Heart left ventricle (tissue), 16 donors: ENCODE measurements at regions of chr2 and their contacts with region 1.

Region 1: GRCh38 chr2:33583194-33583938 is 15.7 kb downstream of the FAM98A start:
- DNase-seq: no peak
- ATAC-seq: peak in 2 of 4 donors; percentile 47 to 48
- H3K4me3 ChIP-seq: no peak overlapping the region
- H3K27ac ChIP-seq: peak overlapping the region in 2 of 12 donors; percentile 28 to 36
- H3K4me1 ChIP-seq: peaks cover 0 to 25% (median 8%) of the 10 kb centered on the region in 12 donors
- H3K27me3 ChIP-seq: no peaks in the 10 kb centered on the region
- CTCF ChIP-seq: peak; percentile 70 to 88 (median 82)
- POLR2A ChIP-seq: no peak

Region 2: GRCh38 chr2:32553829-32554432 is 1029.4 kb before region 1 on chr2:
- intact Hi-C with region 1: loop called in 1 of 10 experiments (anchors 10 kb)
- DNase-seq: no peak
- ATAC-seq: peak in 3 of 4 donors; percentile 63 to 73 (median 64)
- H3K4me3 ChIP-seq: no peak overlapping the region
- H3K27ac ChIP-seq: no peak overlapping the region
- H3K4me1 ChIP-seq: peaks cover 0 to 5% (median 0%) of the 10 kb centered on the region in 12 donors
- H3K27me3 ChIP-seq: no peaks in the 10 kb centered on the region
- CTCF ChIP-seq: peak; percentile 57 to 81 (median 72)
- POLR2A ChIP-seq: no peak

Region 3: GRCh38 chr2:33412920-33413319 is 170.4 kb before region 1 on chr2:
- intact Hi-C with region 1: loop called in 7 of 10 experiments (anchors 2 to 10 kb)
- DNase-seq: peak in 1 of 5 donors; percentile 28
- ATAC-seq: peak in 2 of 4 donors; percentile 10 to 50
- H3K4me3 ChIP-seq: no peak overlapping the region
- H3K27ac ChIP-seq: no peak overlapping the region
- H3K4me1 ChIP-seq: peaks cover 0 to 11% (median 2%) of the 10 kb centered on the region in 12 donors
- H3K27me3 ChIP-seq: no peaks in the 10 kb centered on the region
- CTCF ChIP-seq: peak; percentile 33 to 70 (median 55)
- POLR2A ChIP-seq: no peak

Region 4: GRCh38 chr2:33419581-33420200 is 163.7 kb before region 1 on chr2:
- intact Hi-C with region 1: loop called in 6 of 10 experiments (anchors 5 to 10 kb)
- DNase-seq: no peak
- ATAC-seq: no peak
- H3K4me3 ChIP-seq: no peak overlapping the region
- H3K27ac ChIP-seq: peak overlapping the region in 1 of 12 donors; percentile 9
- H3K4me1 ChIP-seq: peaks cover 0 to 14% (median 0%) of the 10 kb centered on the region in 12 donors
- H3K27me3 ChIP-seq: no peaks in the 10 kb centered on the region
- CTCF ChIP-seq: peak in 3 of 12 donors; percentile 4 to 19 (median 6)
- POLR2A ChIP-seq: no peak

Region 5: DNA sequence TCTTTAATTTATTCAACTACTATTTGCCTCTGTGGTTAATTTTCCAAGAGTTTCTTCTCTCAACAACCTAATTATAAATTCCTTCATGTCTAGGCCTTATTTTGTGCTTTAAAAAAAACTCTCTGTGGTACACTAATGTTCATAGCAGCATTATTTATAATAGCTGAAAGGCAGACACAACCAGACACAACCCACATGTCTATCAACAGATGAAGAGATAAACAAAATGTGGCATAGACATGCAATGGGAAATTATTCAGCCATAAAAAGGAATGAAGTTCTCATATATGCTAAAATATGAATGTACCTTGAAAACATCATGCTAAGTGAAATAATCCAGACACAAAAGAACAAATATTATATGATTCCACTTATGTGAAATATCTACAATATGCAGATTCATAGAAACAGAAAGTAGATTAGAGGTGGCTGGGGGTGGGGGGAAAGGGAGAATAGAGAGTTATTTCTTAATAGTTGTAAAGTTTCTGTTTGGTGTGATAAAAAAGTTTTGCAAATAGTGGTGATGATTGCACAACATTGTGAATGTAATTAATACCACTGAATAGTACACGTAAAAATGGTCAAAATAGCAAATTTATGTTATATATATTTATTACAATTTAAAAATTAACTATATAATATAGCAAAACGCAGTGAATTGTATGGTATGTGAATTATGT is 135.0 kb before region 1 on chr2:
- intact Hi-C with region 1: loop called in 2 of 10 experiments (anchors 5 to 10 kb)
- DNase-seq: no peak
- ATAC-seq: no peak
- H3K4me3 ChIP-seq: no peak overlapping the region
- H3K27ac ChIP-seq: no peak overlapping the region
- H3K4me1 ChIP-seq: peaks cover 0 to 24% (median 16%) of the 10 kb centered on the region in 12 donors
- H3K27me3 ChIP-seq: no peaks in the 10 kb centered on the region
- CTCF ChIP-seq: no peak
- POLR2A ChIP-seq: no peak